Dendritic cell treated with granulocyte-macrophage colony-stimulating factor and Interleukin-4, amounts not matched to agents 40 ng/mL and 50 ng/mL, for 4 days (primary cell): ENCODE measurements at regions of chr5 and their contacts with region 1.

Region 1: GRCh38 chr5:135466178-135467050 is 14.3 kb upstream of the TIFAB start:
- H3K4me3 Mint-ChIP-seq: peak overlapping the region; percentile 60
- H3K27ac Mint-ChIP-seq: peak overlapping the region; percentile 42
- H3K4me1 Mint-ChIP-seq: peaks cover 8% of the 10 kb centered on the region
- H3K27me3 Mint-ChIP-seq: peaks cover 70% of the 10 kb centered on the region

Region 2: GRCh38 chr5:135551593-135552447 is 85.4 kb after region 1 on chr5:
- intact Hi-C with region 1: loop called (anchors 1 kb)
- H3K4me3 Mint-ChIP-seq: no peak overlapping the region
- H3K27ac Mint-ChIP-seq: no peak overlapping the region
- H3K4me1 Mint-ChIP-seq: peaks cover 6% of the 10 kb centered on the region
- H3K27me3 Mint-ChIP-seq: peaks cover 86% of the 10 kb centered on the region

Region 3: DNA sequence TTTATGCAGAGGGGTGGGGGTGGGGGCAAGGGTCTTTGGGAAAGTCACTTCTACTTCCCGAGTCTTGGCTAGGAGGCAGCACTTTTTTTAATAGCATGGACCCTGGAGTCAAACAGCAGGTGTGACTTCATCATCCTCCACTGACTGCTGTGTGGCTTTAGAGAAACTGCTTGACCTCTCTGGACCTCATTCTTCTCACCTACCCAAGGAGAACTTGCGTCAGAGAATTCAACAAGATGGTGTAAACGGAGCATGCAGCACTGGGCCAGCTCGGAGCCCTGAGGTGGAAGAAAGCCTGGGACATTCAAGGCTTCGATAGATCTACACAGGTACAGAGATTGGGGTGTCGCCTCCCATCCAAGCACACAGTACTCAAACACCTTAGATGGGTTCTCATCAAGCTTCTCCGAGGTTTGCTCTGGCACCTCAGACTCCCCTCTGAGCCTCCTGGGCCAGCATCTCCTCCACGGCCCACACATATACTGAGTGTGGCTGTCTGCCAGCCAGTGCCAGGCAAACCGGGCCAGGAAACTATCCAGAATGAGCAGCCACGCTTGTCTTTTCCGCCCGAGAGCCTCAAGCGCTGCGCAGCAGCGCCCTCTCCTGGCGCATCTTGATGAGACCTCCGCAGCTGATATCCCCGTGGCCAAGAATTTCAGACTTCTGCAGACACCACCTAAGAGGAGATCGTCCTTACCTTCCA is 363.4 kb after region 1 on chr5:
- intact Hi-C with region 1: loop called (anchors 10 kb)
- H3K4me3 Mint-ChIP-seq: no peak overlapping the region
- H3K27ac Mint-ChIP-seq: peak overlapping the region; percentile 9
- H3K4me1 Mint-ChIP-seq: peaks cover 37% of the 10 kb centered on the region
- H3K27me3 Mint-ChIP-seq: peaks cover 66% of the 10 kb centered on the region